CD8-positive, alpha-beta memory T cell (primary cell): ENCODE measurements at regions of chr18 and their contacts with region 1.

Region 1: GRCh38 chr18:51197661-51198424 is at the start of gene MEX3C:
- DNase-seq: peak; percentile 98 to 99 (median 99)
- H3K4me3 ChIP-seq: peak within 1 kb of the TSS; percentile 96
- H3K4me3 Mint-ChIP-seq: peak within 1 kb of the TSS; percentile 94 to 100 (median 99)
- H3K27ac ChIP-seq: peak within 1 kb of the TSS; percentile 85
- H3K27ac Mint-ChIP-seq: peak within 1 kb of the TSS; percentile 88 to 99 (median 98)
- H3K4me1 ChIP-seq: peaks cover 24% of the 10 kb centered on the region
- H3K4me1 Mint-ChIP-seq: peaks cover 28 to 33% (median 29%) of the 10 kb centered on the region in 3 donors
- H3K27me3 ChIP-seq: no peaks in the 10 kb centered on the region
- H3K27me3 Mint-ChIP-seq: peaks cover 0 to 3% of the 10 kb centered on the region in 2 donors
- total RNA-seq, gene MEX3C: 68.6 to 69.8 TPM

Region 2: GRCh38 chr18:50878345-50879301 is 319.2 kb before region 1 on chr18 and contains the start of gene ME2:
- CTCF ChIA-PET with region 1: no interaction called
- POLR2A ChIA-PET with region 1: interaction called, 11 read pairs
- DNase-seq: peak; percentile 82 to 91 (median 86)
- H3K4me3 ChIP-seq: peak within 1 kb of the TSS; percentile 83
- H3K4me3 Mint-ChIP-seq: peak within 1 kb of the TSS; percentile 94 to 99 (median 98)
- H3K27ac ChIP-seq: peak within 1 kb of the TSS; percentile 85
- H3K27ac Mint-ChIP-seq: peak within 1 kb of the TSS; percentile 94 to 100 (median 99)
- H3K4me1 ChIP-seq: peaks cover 33% of the 10 kb centered on the region
- H3K4me1 Mint-ChIP-seq: peaks cover 26 to 41% (median 34%) of the 10 kb centered on the region in 3 donors
- H3K27me3 ChIP-seq: no peaks in the 10 kb centered on the region
- H3K27me3 Mint-ChIP-seq: peaks cover 4 to 5% of the 10 kb centered on the region in 2 donors
- total RNA-seq, gene ME2: 114 to 120 TPM

Region 3: GRCh38 chr18:50944245-50944932 is 253.5 kb before region 1 on chr18:
- CTCF ChIA-PET with region 1: no interaction called
- POLR2A ChIA-PET with region 1: no interaction called
- DNase-seq: no peak
- H3K4me3 ChIP-seq: no peak overlapping the region
- H3K4me3 Mint-ChIP-seq: no peak overlapping the region
- H3K27ac ChIP-seq: no peak overlapping the region
- H3K27ac Mint-ChIP-seq: peak overlapping the region in 2 of 8 donors; percentile 68 to 69
- H3K4me1 ChIP-seq: no peaks in the 10 kb centered on the region
- H3K4me1 Mint-ChIP-seq: no peaks in the 10 kb centered on the region
- H3K27me3 ChIP-seq: no peaks in the 10 kb centered on the region
- H3K27me3 Mint-ChIP-seq: no peaks in the 10 kb centered on the region

Region 4: GRCh38 chr18:51153659-51154371 is 44.0 kb before region 1 on chr18:
- CTCF ChIA-PET with region 1: interaction called, 24 read pairs
- POLR2A ChIA-PET with region 1: interaction called, 11 read pairs
- DNase-seq: peak; percentile 41 to 67 (median 54)
- H3K4me3 ChIP-seq: peak overlapping the region; percentile 71
- H3K4me3 Mint-ChIP-seq: peak overlapping the region; percentile 67 to 92 (median 83)
- H3K27ac ChIP-seq: peak overlapping the region; percentile 26
- H3K27ac Mint-ChIP-seq: peak overlapping the region; percentile 82 to 97 (median 92)
- H3K4me1 ChIP-seq: peaks cover 34% of the 10 kb centered on the region
- H3K4me1 Mint-ChIP-seq: peaks cover 36 to 38% (median 36%) of the 10 kb centered on the region in 3 donors
- H3K27me3 ChIP-seq: no peaks in the 10 kb centered on the region
- H3K27me3 Mint-ChIP-seq: no peaks in the 10 kb centered on the region